HCT116 (cell line): ENCODE measurements at regions of chr19 and their contacts with region 1.

Region 1: GRCh38 chr19:48110350-48110966 is at the start of gene PLA2G4C:
- DNase-seq: peak; percentile 77
- ATAC-seq: peak; percentile 71
- H3K4me3 ChIP-seq: peak within 1 kb of the TSS; percentile 68 to 72
- H3K27ac ChIP-seq: peak within 1 kb of the TSS; percentile 88
- H3K4me1 ChIP-seq: peaks cover 15 to 29% of the 10 kb centered on the region in 2 experiments
- H3K27me3 ChIP-seq: no peaks in the 10 kb centered on the region
- CTCF ChIP-seq: no peak
- POLR2A ChIP-seq: peak; percentile 33
- RAD21 ChIP-seq: no peak
- total RNA-seq, gene PLA2G4C: 1.7 TPM

Region 2: DNA sequence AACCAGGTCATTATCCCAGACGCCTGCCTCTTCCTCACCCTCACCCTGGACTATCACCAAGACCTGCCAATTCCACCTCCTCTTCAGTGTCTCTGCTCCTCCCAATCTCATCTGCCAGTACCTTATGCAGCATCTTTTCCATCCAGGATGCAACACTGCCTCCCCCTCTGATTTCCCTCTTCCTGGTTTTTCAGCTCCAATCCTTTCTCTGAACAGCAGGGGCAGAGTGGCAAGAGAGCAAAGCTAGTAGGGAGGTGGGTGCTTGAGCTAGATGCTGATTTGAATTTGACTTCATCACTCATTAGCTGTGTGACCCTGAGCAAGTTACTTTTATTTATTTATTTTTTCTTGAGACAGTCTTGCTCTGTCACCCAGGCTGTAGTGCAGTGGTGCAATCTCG is 41.0 kb before region 1 on chr19:
- CTCF ChIA-PET with region 1: no interaction called
- POLR2A ChIA-PET with region 1: no interaction called
- RAD21 ChIA-PET with region 1: no interaction called
- intact Hi-C with region 1: no loop called
- DNase-seq: no peak
- ATAC-seq: peak; percentile 80
- H3K4me3 ChIP-seq: no peak overlapping the region
- H3K27ac ChIP-seq: no peak overlapping the region
- H3K4me1 ChIP-seq: no peaks in the 10 kb centered on the region
- H3K27me3 ChIP-seq: no peaks in the 10 kb centered on the region
- CTCF ChIP-seq: peak in 2 of 3 experiments; percentile 31 to 34; a peak in 3 of 6 replicates
- POLR2A ChIP-seq: no peak
- RAD21 ChIP-seq: no peak

Region 3: GRCh38 chr19:48152551-48152950 is 42.1 kb after region 1 on chr19:
- CTCF ChIA-PET with region 1: interaction called, 4 read pairs
- POLR2A ChIA-PET with region 1: no interaction called
- RAD21 ChIA-PET with region 1: interaction called in 1 of 2 experiments, 5 read pairs
- intact Hi-C with region 1: loop called (anchors 1 kb)
- DNase-seq: peak; percentile 18
- ATAC-seq: peak; percentile 50
- H3K4me3 ChIP-seq: no peak overlapping the region
- H3K27ac ChIP-seq: no peak overlapping the region
- H3K4me1 ChIP-seq: no peaks in the 10 kb centered on the region
- H3K27me3 ChIP-seq: no peaks in the 10 kb centered on the region
- CTCF ChIP-seq: peak; percentile 69 to 88 (median 79)
- POLR2A ChIP-seq: no peak
- RAD21 ChIP-seq: peak; percentile 79